Posterior cingulate gyrus (tissue), 11 donors: ENCODE measurements at regions of chr3 and their contacts with region 1.

Region 1: DNA sequence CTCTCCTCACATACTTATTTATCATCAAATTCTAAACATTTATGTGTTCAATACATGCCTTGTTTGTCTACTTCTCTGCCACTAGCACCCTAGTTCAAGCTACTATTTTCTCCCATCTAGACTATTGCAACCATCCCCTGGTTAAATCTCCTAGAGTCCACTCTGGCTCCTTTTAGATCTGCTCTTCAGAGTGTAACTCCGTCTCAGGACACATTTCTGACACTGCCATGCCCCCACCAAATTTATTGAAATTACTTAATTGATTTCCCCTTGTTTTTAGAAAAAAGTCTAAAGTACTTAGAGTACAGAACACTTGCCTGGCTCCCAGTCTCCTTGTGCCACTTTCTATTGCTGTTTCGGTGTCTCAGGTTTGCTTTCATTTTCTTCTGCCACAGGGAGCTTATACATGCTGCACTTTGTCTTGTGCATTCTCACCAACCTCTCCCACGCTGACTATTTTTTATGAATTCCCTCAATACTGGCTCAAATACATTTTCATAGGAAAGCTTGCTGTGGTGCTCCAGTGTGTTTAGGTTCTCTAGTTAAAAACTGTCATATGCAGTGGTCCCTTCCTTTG is 792.3 kb downstream of the DIPK2A start:
- DNase-seq: no peak

Region 2: DNA sequence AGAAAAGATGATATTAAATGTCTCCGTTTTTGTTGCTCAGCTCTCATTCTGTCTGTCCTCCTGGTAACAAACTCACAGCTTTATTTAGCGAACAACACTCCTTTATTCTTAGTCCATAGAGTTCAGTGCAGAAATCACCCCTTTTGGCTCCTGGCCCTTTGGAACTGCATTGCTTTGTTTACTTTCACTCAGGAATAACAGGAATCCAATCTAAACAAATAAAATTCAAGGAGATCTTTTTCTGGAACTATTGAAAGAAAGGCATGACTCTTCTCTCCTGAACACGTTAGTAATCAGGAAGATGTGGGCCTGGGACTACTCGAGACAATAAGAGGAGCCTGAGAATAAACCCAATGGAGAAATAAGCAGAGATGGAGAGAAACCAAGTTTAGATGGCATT is 383.1 kb before region 1 on chr3:
- intact Hi-C with region 1: loop called (anchors 5 kb)
- DNase-seq: peak in 1 of 10 donors; percentile 41